ENCODE measurements at regions of chr1 and their contacts with region 1.

Region 1: GRCh38 chr1:28088168-28088961 is at the start of gene EYA3:
- DNase-seq: peak; percentile 100
- H3K4me3 Mint-ChIP-seq: peak within 1 kb of the TSS; percentile 90
- H3K27ac Mint-ChIP-seq: peak within 1 kb of the TSS; percentile 86
- H3K4me1 Mint-ChIP-seq: peaks cover 34% of the 10 kb centered on the region
- H3K27me3 Mint-ChIP-seq: no peaks in the 10 kb centered on the region
- total RNA-seq, gene EYA3: 26.4 to 27.4 TPM

Region 2: GRCh38 chr1:27858072-27858958 is 230.1 kb before region 1 on chr1:
- CTCF ChIA-PET with region 1: interaction called, 10 read pairs
- POLR2A ChIA-PET with region 1: no interaction called
- intact Hi-C with region 1: loop called (anchors 5 kb)
- DNase-seq: peak; percentile 90
- H3K4me3 Mint-ChIP-seq: no peak overlapping the region
- H3K27ac Mint-ChIP-seq: no peak overlapping the region
- H3K4me1 Mint-ChIP-seq: peaks cover 10% of the 10 kb centered on the region
- H3K27me3 Mint-ChIP-seq: no peaks in the 10 kb centered on the region

Region 3: GRCh38 chr1:27992276-27992675 is 96.1 kb before region 1 on chr1:
- CTCF ChIA-PET with region 1: no interaction called
- POLR2A ChIA-PET with region 1: interaction called, 3 read pairs
- intact Hi-C with region 1: loop called (anchors 10 kb)
- DNase-seq: peak; percentile 60
- H3K4me3 Mint-ChIP-seq: no peak overlapping the region
- H3K27ac Mint-ChIP-seq: peak overlapping the region; percentile 72
- H3K4me1 Mint-ChIP-seq: peaks cover 25% of the 10 kb centered on the region
- H3K27me3 Mint-ChIP-seq: no peaks in the 10 kb centered on the region

Region 4: DNA sequence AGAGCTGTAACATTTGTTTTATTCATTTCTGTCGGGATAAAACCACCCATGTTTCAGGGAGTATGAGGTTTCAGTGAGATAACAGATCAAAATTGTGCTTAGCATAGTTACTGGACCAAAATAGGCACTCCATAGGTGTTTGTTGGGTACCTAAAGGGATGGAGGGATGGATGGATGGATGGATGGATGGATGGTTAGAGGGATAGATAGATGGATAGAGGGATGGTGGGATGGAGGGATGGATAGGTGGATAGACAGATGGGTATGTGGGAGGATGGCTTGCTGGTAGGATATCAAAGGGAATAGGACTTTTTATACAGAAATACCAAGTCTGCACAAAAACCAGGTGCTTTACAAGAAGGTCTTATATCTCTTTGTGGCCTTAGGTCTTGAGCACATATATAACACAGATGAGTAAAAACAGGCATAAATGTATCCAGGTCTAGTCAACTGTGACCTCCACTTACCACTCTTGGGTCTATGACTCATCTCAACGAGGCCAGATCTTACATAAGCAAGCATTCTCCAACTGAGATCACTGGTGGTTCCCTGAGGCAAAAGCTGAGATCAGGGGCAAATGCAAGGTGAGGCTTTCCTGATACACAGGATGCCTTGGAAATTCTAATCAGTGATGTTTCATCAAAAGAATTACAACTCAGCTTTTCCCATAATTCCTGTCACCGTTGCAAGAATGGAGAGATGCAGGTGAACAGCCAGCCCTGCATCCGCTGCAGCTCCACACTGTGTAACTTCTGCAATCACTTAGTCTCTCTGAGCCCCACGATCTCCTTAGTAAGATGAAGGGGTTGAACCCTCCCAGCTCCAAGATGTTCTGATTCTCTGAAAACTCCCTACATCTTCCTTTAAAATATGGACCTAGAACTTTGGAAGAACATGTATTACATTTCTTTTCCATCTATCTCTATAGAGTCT is 56.1 kb after region 1 on chr1:
- CTCF ChIA-PET with region 1: interaction called, 7 read pairs
- POLR2A ChIA-PET with region 1: interaction called, 4 read pairs
- intact Hi-C with region 1: loop called (anchors 1 kb)
- DNase-seq: peak; percentile 68
- H3K4me3 Mint-ChIP-seq: no peak overlapping the region
- H3K27ac Mint-ChIP-seq: no peak overlapping the region
- H3K4me1 Mint-ChIP-seq: peaks cover 18% of the 10 kb centered on the region
- H3K27me3 Mint-ChIP-seq: peaks cover 7% of the 10 kb centered on the region

Region 5: DNA sequence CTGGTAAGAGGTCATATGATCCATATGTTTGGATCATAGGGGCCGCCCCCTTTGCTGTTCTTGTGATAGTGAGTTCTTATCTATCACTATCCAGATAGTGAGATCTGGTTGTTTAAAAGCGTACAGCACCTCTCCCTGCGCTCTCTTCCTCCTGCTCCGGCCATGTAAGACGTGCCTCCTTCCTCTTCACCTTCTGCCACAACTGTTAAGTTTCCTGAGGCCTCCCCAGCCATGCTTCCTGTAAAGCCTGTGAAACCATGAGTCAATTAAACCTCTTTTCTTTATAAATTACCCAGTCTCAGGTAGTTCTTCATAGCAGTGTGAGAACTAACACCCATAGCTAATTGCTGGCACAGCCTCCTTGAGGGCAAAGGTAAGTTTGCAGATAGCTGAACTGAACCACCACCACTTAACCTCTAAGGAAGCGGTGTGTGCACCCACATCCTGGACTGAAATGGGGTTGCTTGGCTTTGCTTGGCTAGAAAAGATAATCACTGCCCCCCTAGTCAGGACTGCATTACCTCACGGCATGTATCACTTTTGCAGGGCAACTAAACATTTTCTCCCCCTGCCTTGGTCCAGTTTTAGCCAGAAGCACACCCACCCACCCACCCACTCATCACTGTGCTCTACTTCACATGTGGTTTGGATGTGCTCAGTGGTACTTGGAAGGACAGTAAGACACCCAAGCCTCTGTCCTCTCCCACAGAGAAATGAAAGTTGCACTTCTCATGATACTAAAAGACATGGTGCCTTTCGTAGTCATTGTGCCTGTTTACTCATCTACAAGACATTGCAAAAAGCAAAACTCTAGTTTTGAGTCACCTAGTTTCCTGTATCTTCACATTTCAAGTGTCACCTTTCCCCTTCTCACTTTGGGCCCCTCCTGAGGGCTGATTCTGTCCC is 111.2 kb after region 1 on chr1:
- CTCF ChIA-PET with region 1: interaction called, 8 read pairs
- POLR2A ChIA-PET with region 1: interaction called, 9 read pairs
- intact Hi-C with region 1: loop called (anchors 2 kb)
- DNase-seq: peak; percentile 89
- H3K4me3 Mint-ChIP-seq: peak overlapping the region; percentile 28
- H3K27ac Mint-ChIP-seq: peak overlapping the region; percentile 87
- H3K4me1 Mint-ChIP-seq: peaks cover 41% of the 10 kb centered on the region
- H3K27me3 Mint-ChIP-seq: no peaks in the 10 kb centered on the region

Region 6: GRCh38 chr1:28329395-28330153 is 241.2 kb after region 1 on chr1:
- CTCF ChIA-PET with region 1: no interaction called
- POLR2A ChIA-PET with region 1: interaction called, 3 read pairs
- intact Hi-C with region 1: loop called (anchors 2 kb)
- DNase-seq: peak; percentile 59
- H3K4me3 Mint-ChIP-seq: peak overlapping the region; percentile 93
- H3K27ac Mint-ChIP-seq: peak overlapping the region; percentile 96
- H3K4me1 Mint-ChIP-seq: peaks cover 28% of the 10 kb centered on the region
- H3K27me3 Mint-ChIP-seq: peaks cover 1% of the 10 kb centered on the region

Region 7: DNA sequence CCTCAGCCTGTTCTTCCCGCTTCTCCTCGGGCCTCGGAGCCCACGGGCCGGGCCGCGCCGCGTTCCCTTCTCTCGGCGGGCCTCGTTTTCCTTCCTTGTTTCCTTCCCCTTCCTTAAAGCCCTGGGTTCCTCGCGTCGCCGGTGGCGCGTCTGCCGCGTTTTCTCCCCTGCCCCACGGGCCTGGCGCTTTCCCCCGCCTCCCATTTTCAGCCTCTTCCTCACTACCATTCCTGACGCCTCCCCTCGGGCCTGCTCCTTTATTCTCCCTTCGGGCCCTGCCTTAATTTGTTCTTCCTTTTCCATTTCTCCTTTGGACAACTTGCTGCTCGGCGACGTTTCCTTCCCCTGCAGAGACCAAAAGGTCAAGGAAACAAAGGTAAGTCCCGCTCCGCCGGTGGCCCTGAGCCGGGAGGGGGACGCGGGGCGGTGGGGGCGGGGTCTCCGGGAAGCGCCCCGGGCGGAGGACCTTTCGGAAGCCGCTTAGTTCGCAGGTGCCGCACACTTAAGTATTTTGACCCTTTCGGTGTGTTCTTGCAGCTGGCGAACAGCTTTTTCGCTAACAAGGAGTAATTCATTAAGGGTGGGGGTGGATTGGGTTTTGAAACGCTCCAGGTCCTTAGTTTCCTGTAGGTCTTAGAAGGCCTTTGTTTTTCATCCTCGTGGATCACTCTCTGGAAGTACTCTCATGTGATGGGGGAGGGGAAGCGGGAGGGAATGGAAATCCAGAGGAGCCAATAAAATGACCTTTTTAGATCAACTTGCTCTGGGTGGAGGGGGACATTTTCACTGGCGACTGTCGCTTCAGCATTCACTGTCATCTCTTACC is 649.2 kb after region 1 on chr1:
- CTCF ChIA-PET with region 1: no interaction called
- POLR2A ChIA-PET with region 1: no interaction called
- intact Hi-C with region 1: no loop called
- DNase-seq: peak; percentile 62
- H3K4me3 Mint-ChIP-seq: peak overlapping the region; percentile 83
- H3K27ac Mint-ChIP-seq: peak overlapping the region; percentile 85
- H3K4me1 Mint-ChIP-seq: peaks cover 42% of the 10 kb centered on the region
- H3K27me3 Mint-ChIP-seq: no peaks in the 10 kb centered on the region

Measured in activated CD4-positive, alpha-beta memory T cell treated with anti-CD3 and anti-CD28 coated beads for 36 hours (primary cell).